ENCODE measurements at regions of chr3 and their contacts with region 1.

Region 1: GRCh38 chr3:46629551-46630517 is 17.5 kb downstream of the FAM240A start:
- DNase-seq: peak; percentile 91
- ATAC-seq: peak; percentile 89
- H3K4me3 Mint-ChIP-seq: peak overlapping the region; percentile 27
- H3K27ac Mint-ChIP-seq: peak overlapping the region; percentile 72
- H3K4me1 Mint-ChIP-seq: peaks cover 51% of the 10 kb centered on the region
- H3K27me3 Mint-ChIP-seq: no peaks in the 10 kb centered on the region; the same call in 1 of the 2 replicates
- CTCF ChIP-seq: peak; percentile 44; the same call in 1 of the 2 replicates

Region 2: GRCh38 chr3:46558184-46559043 is 71.4 kb before region 1 on chr3:
- CTCF ChIA-PET with region 1: interaction called, 22 read pairs
- POLR2A ChIA-PET with region 1: no interaction called
- DNase-seq: peak; percentile 76
- ATAC-seq: peak; percentile 88
- H3K4me3 Mint-ChIP-seq: peak overlapping the region; percentile 57
- H3K27ac Mint-ChIP-seq: peak overlapping the region; percentile 92
- H3K4me1 Mint-ChIP-seq: peaks cover 60% of the 10 kb centered on the region
- H3K27me3 Mint-ChIP-seq: no peaks in the 10 kb centered on the region; the same call in 1 of the 2 replicates
- CTCF ChIP-seq: no peak

Region 3: DNA sequence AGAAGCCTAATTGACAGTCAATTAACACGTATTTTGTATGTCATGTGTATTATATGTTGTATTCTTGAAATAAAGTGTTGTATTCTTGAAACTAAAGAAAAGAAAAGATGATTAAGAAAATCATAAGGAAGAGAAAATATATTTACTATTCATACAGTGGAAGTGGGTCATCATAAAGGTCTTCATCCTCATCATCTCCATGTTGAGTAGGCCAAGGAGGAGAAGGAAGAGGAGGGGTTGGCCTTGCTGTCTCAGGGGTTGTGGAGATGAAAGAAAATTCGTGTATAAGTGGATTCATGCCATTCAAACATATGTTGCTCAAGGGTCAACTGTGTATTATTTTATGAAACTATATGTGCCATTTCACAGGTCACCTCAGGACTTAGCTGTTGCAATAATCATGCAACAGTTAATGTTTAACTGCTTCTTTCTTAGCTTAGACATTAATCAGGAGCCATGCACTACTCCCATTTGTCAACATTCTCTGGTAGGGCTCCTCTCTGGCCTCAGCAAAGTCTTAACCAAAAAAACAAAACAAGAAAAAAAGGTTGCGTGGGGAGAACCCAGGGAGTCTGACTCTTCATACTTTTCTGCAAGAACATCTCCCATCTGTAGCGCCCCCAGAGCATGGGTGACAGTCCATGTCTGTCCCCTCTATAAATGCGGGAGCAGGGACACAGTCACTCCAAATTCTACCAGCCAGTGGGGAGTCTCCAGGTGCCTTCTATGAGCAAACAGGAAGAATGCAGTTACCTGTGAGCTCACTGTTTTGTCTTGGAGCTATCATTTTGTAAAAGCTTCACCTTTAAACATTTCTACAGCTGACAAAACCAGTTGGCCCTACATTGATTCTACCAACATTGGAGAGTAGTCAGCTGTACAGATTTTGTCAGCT is 43.8 kb before region 1 on chr3:
- CTCF ChIA-PET with region 1: interaction called, 24 read pairs
- POLR2A ChIA-PET with region 1: interaction called, 22 read pairs
- DNase-seq: no peak
- ATAC-seq: peak; percentile 54
- H3K4me3 Mint-ChIP-seq: no peak overlapping the region
- H3K27ac Mint-ChIP-seq: peak overlapping the region; percentile 42
- H3K4me1 Mint-ChIP-seq: peaks cover 41% of the 10 kb centered on the region
- H3K27me3 Mint-ChIP-seq: peaks cover 44% of the 10 kb centered on the region
- CTCF ChIP-seq: no peak

Region 4: GRCh38 chr3:46599590-46599989 is 30.2 kb before region 1 on chr3:
- CTCF ChIA-PET with region 1: interaction called, 15 read pairs
- POLR2A ChIA-PET with region 1: no interaction called
- DNase-seq: no peak
- ATAC-seq: peak; percentile 64
- H3K4me3 Mint-ChIP-seq: no peak overlapping the region; the same call in 1 of the 2 replicates
- H3K27ac Mint-ChIP-seq: peak overlapping the region; percentile 95
- H3K4me1 Mint-ChIP-seq: peaks cover 57% of the 10 kb centered on the region
- H3K27me3 Mint-ChIP-seq: no peaks in the 10 kb centered on the region; the same call in 1 of the 2 replicates
- CTCF ChIP-seq: no peak

Region 5: GRCh38 chr3:46663591-46664135 is 33.8 kb after region 1 on chr3:
- CTCF ChIA-PET with region 1: interaction called, 33 read pairs
- POLR2A ChIA-PET with region 1: interaction called, 3 read pairs
- DNase-seq: peak; percentile 58
- ATAC-seq: peak; percentile 37
- H3K4me3 Mint-ChIP-seq: no peak overlapping the region
- H3K27ac Mint-ChIP-seq: no peak overlapping the region; the same call in 1 of the 2 replicates
- H3K4me1 Mint-ChIP-seq: peaks cover 54% of the 10 kb centered on the region
- H3K27me3 Mint-ChIP-seq: no peaks in the 10 kb centered on the region; the same call in 1 of the 2 replicates
- CTCF ChIP-seq: no peak

Region 6: GRCh38 chr3:46833346-46834300 is 203.8 kb after region 1 on chr3:
- CTCF ChIA-PET with region 1: no interaction called
- POLR2A ChIA-PET with region 1: no interaction called
- DNase-seq: no peak
- ATAC-seq: no peak
- H3K4me3 Mint-ChIP-seq: no peak overlapping the region
- H3K27ac Mint-ChIP-seq: no peak overlapping the region
- H3K4me1 Mint-ChIP-seq: no peaks in the 10 kb centered on the region
- H3K27me3 Mint-ChIP-seq: peaks cover 13% of the 10 kb centered on the region
- CTCF ChIP-seq: no peak